ENCODE measurements at regions of chr11 and their contacts with region 1.

Region 1: GRCh38 chr11:95556342-95557163 is 233.0 kb downstream of the FAM76B start:
- DNase-seq: no peak
- H3K4me3 Mint-ChIP-seq: no peak overlapping the region
- H3K27ac Mint-ChIP-seq: peak overlapping the region; percentile 91
- H3K4me1 Mint-ChIP-seq: peaks cover 37% of the 10 kb centered on the region
- H3K27me3 Mint-ChIP-seq: no peaks in the 10 kb centered on the region

Region 2: GRCh38 chr11:95337175-95337957 is 219.2 kb before region 1 on chr11:
- intact Hi-C with region 1: loop called (anchors 5 kb)
- DNase-seq: peak; percentile 46
- H3K4me3 Mint-ChIP-seq: no peak overlapping the region
- H3K27ac Mint-ChIP-seq: no peak overlapping the region
- H3K4me1 Mint-ChIP-seq: peaks cover 15% of the 10 kb centered on the region
- H3K27me3 Mint-ChIP-seq: peaks cover 2% of the 10 kb centered on the region

Region 3: GRCh38 chr11:95577716-95578460 is 21.3 kb after region 1 on chr11:
- intact Hi-C with region 1: loop called (anchors 2 kb)
- DNase-seq: no peak
- H3K4me3 Mint-ChIP-seq: no peak overlapping the region
- H3K27ac Mint-ChIP-seq: peak overlapping the region; percentile 32
- H3K4me1 Mint-ChIP-seq: peaks cover 15% of the 10 kb centered on the region
- H3K27me3 Mint-ChIP-seq: no peaks in the 10 kb centered on the region

Region 4: DNA sequence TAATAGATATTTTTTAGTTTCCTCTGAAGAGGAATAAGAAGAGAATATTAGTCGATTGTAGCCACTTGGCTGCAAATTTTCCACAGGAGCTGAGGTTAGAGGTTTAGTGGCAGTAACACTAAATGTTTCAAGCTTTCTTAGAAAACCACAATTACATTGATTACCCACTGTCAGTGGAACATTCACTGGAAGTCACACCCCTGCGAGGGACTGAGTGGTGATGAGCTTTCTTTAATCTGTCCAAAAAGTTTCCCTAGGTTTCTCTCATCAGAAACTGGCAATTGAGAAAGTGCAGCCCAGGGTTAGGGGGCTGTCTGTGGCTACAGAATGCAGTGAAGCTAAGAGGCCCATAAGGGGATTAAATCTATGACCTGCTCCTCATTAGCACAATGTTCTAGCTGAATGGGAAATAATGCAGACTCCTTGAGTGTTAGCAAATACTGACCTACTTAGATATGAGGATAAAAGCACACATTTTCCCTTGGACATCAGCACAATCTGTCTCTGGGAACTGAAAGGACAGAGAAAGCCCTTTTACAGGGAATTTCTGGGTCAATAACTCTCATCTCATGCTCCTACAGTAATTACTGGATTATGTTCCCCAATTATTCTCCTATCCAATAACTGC is 43.5 kb after region 1 on chr11:
- intact Hi-C with region 1: loop called (anchors 5 kb)
- DNase-seq: no peak
- H3K4me3 Mint-ChIP-seq: no peak overlapping the region
- H3K27ac Mint-ChIP-seq: peak overlapping the region; percentile 74
- H3K4me1 Mint-ChIP-seq: peaks cover 21% of the 10 kb centered on the region
- H3K27me3 Mint-ChIP-seq: no peaks in the 10 kb centered on the region

Region 5: DNA sequence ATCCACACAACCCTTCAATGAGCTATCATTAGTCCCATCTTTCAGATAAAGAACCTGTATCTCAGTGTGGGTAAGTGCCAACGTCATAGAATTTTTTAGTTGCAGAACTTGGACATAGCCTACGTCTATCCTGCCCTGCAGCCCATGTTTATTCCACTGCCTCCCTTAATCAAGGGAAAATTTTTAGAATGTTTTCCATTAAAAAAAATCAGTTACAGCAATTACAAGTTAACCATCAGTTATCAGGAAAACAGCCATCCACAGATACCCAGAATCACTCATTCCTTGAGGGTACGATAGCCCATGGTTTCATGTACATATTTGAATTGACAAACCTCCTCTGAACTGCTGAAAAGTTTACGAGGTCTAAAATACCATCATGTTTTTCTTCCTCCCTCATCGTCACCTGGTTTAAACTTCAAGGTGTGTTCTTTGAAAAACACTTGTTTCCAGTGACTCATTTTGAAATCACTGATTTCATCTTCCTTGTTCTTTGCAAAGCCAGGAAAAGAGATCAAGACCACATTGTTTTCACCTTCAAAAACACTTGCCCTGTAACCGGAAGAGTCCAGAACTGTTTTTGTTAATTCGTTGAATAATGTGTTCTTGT is 132.1 kb after region 1 on chr11:
- intact Hi-C with region 1: loop called (anchors 1 kb)
- DNase-seq: no peak
- H3K4me3 Mint-ChIP-seq: peak overlapping the region; percentile 15
- H3K27ac Mint-ChIP-seq: no peak overlapping the region
- H3K4me1 Mint-ChIP-seq: peaks cover 21% of the 10 kb centered on the region
- H3K27me3 Mint-ChIP-seq: no peaks in the 10 kb centered on the region